Posterior cingulate gyrus (tissue), 11 donors: ENCODE measurements at regions of chr10 and their contacts with region 1.

Region 1: DNA sequence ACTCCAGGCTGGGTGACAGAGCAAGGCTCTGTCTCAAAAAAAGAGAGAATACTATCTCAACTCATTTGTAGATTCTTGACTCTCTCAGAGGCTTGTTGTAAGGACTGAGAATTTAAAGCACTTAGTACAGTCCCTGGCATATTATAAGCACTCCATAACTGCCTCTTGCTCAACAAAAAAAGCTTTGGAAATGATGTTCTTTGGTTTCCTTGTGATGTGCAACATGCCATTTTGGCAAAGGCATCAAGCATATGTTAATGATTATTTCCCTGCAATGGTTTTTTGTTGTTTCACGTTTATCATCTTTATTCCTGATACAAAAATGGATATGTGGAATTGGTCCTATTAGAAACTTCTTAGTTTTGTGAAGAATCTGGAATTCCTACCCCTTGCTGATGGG is 15.7 kb downstream of the NOLC1 start:
- DNase-seq: no peak

Region 2: DNA sequence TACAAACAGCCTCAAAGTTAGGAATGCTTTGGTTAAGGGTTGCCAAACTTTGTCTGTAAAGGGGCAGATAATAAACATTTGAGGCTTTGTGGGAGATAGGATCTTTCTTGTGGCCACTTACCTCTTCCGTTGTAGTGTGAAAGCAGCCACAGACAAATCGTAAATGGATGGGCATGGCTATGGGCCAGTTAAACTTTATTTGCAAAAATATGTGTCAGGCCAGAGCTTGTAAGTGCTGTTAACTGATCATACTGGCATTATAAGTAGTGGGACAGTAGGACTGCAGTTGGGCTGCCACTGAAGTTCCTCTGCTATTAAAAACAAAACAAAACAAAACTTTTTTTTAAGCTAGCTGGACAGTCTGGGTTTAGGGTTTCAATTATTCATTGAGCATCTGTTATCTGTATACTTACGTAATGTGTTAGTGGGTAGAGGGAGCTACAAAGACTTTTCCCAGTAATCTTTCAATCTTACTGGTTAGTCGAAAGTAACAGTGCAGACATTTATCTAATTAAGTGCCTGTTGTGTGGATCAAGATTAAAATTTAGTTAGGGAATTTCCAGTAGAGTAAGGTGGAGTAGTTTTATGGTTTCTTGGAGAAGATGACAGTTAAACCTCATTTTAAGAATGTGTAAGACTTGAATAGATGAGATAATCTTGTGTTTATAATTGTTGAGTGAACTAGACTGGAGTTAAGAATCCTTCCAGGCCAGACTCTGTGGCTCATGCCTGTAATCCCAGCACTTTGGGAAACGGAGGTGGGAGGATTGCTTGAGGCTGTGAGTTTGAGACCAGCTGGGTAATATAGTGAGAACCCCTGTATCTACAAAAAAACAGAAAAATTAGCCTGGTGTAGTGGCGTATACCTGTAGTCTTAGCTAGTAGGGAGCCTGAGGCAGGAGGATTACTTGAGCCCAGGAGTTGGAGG is 713.8 kb before region 1 on chr10:
- intact Hi-C with region 1: no loop called
- DNase-seq: no peak

Region 3: DNA sequence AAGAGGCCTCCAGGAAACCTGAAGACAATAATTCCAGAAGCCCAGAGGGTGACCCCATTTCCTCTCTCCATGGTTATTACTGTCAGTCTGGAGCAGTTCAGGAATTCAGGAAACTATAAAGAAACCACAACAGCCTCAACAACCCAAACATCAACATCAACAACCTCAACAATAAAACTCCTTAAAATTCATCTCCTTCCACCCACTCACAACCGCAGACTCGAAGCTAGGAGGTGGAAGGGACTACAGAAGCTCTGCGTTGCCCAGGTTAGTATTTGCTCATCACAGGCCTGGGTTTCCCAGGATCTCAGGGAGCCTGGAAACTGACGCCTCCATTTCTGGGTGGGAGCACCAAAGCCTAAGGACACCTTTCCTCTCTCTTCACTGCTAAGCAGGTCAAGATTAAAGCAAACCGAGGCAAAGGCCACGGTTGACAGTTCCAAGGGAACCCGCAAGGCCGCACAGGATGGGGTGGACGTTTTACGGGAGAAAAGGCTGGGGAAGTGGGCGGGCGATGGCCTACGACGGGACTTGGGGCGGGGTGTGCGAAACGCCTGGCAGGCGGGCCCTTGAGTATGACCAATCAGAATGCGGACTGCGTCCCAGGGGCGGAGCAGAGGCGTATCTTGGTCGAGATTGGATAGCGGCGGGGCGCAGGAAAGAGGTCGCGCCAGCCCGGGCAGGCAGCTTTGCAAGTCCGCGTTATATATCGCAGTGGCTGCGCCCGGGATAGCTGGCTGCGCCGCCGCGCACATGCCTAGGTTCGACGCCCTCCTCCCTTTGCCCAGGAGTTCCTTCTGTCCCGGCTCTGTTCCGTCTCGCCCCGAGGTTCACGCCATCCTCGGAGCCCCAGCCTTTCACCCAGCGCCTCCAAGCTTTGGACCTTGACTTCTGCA is 58.0 kb after region 1 on chr10 and contains the start of gene ELOVL3:
- intact Hi-C with region 1: loop called (anchors 10 kb)
- DNase-seq: peak; percentile 83 to 99 (median 90)

Region 4: DNA sequence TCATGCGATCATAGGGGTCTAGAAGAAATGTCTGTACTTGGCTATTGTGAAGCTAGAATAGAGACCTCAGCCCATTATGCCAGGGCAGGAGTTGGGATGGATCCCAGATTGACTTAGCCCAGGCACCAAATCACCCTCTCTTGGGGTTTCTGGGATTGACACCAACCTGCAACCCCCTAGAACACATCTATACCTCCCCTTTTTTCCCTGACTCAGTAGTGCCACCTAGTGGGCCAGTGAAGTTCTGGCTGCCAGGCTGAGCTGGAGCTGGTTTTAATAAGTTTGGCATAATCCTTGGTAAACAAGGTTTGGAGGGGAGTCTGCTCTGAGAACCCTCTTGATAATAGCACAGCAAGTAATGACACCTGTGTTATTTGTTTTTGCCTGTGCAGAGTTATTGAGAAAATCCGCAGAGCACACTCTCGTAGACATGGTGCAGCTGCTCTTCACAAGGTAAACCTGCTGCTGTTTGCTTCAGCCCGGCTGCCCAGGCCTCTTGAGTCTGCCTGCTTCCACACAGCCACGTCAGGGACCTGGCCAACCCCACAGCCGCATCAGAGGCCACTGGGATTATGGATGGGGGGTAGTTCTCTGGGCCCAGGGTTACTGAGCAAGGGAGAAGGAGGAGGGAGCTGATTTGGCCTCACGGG is 184.3 kb after region 1 on chr10:
- intact Hi-C with region 1: loop called (anchors 5 kb)
- DNase-seq: peak in 6 of 10 donors; percentile 39 to 70 (median 60)

Region 5: GRCh38 chr10:102399217-102400089 is 231.6 kb after region 1 on chr10:
- intact Hi-C with region 1: loop called (anchors 5 kb)
- DNase-seq: peak; percentile 81 to 99 (median 90)